PC-9 (cell line): ENCODE measurements at regions of chr17 and their contacts with region 1.

Region 1: DNA sequence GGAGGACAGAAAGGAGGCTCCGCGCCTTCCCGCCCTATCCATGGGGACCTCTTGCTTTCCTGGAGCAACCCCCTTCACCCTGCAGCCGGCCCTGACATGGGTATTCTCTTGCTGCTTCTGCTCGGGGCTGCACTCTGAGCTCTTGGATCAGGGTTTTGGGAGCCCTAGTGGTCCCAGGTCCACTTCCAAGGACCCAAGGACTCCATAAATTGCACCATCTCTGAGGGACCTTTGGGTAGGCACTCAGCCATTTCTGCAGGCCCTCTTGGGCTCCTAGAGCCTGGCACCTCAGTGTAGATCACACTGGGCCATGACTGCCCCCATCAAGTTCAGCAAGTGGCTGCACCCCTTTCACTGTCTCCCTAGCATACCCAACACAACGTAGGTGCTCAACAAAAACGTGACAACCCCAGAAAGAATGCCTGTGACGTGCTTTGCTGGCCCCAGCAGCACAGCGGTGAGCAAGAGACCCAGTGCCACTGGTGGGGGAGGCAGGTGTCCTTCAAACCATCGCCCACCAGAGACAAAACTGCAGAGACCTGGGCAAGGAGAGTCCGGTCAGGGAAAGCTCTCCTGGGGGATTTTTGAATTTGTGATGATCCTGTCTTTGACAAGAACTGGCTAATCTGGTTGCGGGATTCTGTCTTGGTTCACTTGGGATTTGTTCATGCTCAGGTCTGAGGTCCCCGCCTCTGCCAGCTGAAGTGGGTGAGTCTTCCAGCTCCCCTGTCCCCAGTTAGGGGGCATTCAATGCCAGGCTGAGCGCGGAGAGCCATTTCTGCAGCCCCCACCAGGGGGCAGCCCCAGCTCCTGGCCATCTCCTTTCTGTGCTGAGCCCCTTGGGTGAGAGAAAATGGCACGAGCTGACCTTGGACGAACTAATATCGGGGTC is 2.5 kb upstream of the RAB11FIP4 start:
- DNase-seq: peak in 1 of 2 experiments; percentile 40
- H3K4me3 ChIP-seq: no peak overlapping the region
- H3K27ac ChIP-seq: no peak overlapping the region
- H3K4me1 ChIP-seq: no peaks in the 10 kb centered on the region
- H3K27me3 ChIP-seq: no peaks in the 10 kb centered on the region
- CTCF ChIP-seq: peak; percentile 60

Region 2: GRCh38 chr17:30808785-30809286 is 580.2 kb before region 1 on chr17:
- CTCF ChIA-PET with region 1: interaction called, 12 read pairs
- POLR2A ChIA-PET with region 1: no interaction called
- intact Hi-C with region 1: no loop called
- DNase-seq: no peak
- H3K4me3 ChIP-seq: no peak overlapping the region
- H3K27ac ChIP-seq: no peak overlapping the region
- H3K4me1 ChIP-seq: no peaks in the 10 kb centered on the region
- H3K27me3 ChIP-seq: no peaks in the 10 kb centered on the region
- CTCF ChIP-seq: no peak

Region 3: GRCh38 chr17:31004160-31004559 is 384.9 kb before region 1 on chr17:
- CTCF ChIA-PET with region 1: interaction called, 14 read pairs
- POLR2A ChIA-PET with region 1: no interaction called
- intact Hi-C with region 1: no loop called
- DNase-seq: no peak
- H3K4me3 ChIP-seq: no peak overlapping the region
- H3K27ac ChIP-seq: no peak overlapping the region
- H3K4me1 ChIP-seq: no peaks in the 10 kb centered on the region
- H3K27me3 ChIP-seq: no peaks in the 10 kb centered on the region
- CTCF ChIP-seq: no peak

Region 4: DNA sequence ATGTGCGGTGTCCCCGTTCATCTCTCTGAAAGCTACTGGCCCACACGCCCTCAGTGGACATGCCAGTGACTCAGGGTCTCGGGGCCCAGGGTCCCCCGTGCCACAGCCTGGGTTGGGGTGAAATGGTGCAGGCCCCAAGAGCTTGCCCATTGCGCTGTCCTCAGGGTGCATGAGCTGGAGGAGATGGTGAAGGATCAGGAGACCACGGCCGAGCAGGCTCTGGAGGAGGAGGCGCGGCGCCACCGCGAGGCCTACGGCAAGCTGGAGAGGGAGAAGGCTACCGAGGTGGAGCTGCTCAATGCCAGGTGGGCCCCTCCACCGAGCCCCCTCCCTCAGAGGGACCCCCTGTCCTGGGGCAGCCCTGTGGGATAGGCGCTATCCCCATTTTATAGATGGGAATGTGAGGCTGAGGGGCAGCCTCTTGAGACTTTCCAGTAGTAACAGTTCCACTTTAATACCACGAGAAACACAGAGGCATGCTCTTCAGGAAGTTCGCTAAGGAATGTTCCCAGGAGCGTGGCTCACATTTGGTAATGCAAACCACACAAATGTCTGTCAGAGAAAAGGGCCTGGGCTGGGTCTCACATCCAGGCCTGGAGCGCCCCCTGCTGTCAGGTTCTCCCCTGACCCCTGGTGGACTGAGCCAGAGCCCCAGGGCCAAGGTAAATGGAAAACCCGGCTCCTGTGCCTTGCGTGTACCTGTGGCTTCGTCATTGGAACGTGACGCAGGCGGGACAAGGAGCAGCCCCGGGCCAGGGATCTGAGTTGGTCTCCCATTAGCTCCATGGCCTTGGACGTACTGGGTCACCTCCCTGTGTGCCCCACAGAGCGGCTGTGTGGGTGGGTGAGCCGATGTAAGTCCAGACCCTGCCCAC is 136.1 kb after region 1 on chr17:
- CTCF ChIA-PET with region 1: no interaction called
- POLR2A ChIA-PET with region 1: no interaction called
- intact Hi-C with region 1: loop called (anchors 1 kb)
- DNase-seq: peak; percentile 85 to 88
- H3K4me3 ChIP-seq: no peak overlapping the region
- H3K27ac ChIP-seq: no peak overlapping the region
- H3K4me1 ChIP-seq: peaks cover 5% of the 10 kb centered on the region; the same call in 1 of the 2 replicates
- H3K27me3 ChIP-seq: no peaks in the 10 kb centered on the region
- CTCF ChIP-seq: peak; percentile 94

Region 5: GRCh38 chr17:31842183-31843069 is 453.4 kb after region 1 on chr17:
- CTCF ChIA-PET with region 1: no interaction called
- POLR2A ChIA-PET with region 1: no interaction called
- intact Hi-C with region 1: loop called (anchors 5 kb)
- DNase-seq: peak; percentile 43 to 62
- H3K4me3 ChIP-seq: peak overlapping the region; percentile 42; the same call in 1 of the 2 replicates
- H3K27ac ChIP-seq: no peak overlapping the region
- H3K4me1 ChIP-seq: no peaks in the 10 kb centered on the region
- H3K27me3 ChIP-seq: no peaks in the 10 kb centered on the region
- CTCF ChIP-seq: peak; percentile 98